H1 (cell line): ENCODE measurements at regions of chr22 and their contacts with region 1.

Region 1: GRCh38 chr22:43427296-43428004 is 15.6 kb downstream of the MPPED1 start:
- DNase-seq: no peak
- H3K4me3 ChIP-seq: no peak overlapping the region
- H3K27ac ChIP-seq: no peak overlapping the region
- H3K4me1 ChIP-seq: peaks cover 0 to 3% (median 0%) of the 10 kb centered on the region in 4 experiments; a peak in 2 of 7 replicates
- H3K27me3 ChIP-seq: no peaks in the 10 kb centered on the region; a peak in 1 of 7 replicates
- CTCF ChIP-seq: peak; percentile 40 to 62 (median 42)
- EP300 ChIP-seq: no peak
- POLR2A ChIP-seq: no peak
- RAD21 ChIP-seq: peak; percentile 34 to 53; a peak in 3 of 4 replicates

Region 2: DNA sequence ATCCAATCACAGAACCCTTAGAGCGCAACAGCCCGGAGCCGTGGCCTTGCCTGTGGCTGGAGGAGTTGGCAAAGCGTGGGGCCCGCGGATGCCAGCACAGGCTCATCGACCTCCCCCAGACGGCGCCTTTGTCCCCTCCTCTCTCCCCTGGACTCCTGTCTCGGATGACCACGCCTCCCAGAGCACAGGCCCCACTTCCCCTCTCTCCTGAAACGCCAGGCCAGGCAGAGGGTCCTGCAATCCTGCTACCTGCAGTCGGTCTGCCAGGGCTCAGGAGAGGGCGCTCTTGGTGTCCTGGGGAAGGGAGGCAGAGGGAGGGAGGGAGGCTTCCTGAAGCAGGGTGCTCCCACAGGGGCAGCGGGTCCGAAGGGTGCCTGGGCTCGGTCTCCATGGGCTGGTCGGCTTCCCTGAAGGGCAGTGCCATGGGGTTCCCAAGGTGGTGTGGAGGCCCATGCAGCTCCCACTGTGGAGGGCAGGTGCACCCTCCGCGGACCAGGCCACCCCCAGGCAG is 223.9 kb before region 1 on chr22:
- CTCF ChIA-PET with region 1: no interaction called
- POLR2A ChIA-PET with region 1: no interaction called
- DNase-seq: peak; percentile 70 to 82
- H3K4me3 ChIP-seq: peak overlapping the region in 1 of 4 experiments; percentile 37; a peak in 1 of 8 replicates
- H3K27ac ChIP-seq: no peak overlapping the region
- H3K4me1 ChIP-seq: peaks cover 2 to 11% (median 4%) of the 10 kb centered on the region in 4 experiments; a peak in 6 of 7 replicates
- H3K27me3 ChIP-seq: no peaks in the 10 kb centered on the region
- CTCF ChIP-seq: peak; percentile 64 to 79 (median 77)
- EP300 ChIP-seq: no peak
- POLR2A ChIP-seq: no peak
- RAD21 ChIP-seq: peak; percentile 54 to 63

Region 3: GRCh38 chr22:43326331-43327156 is 100.9 kb before region 1 on chr22:
- CTCF ChIA-PET with region 1: no interaction called
- POLR2A ChIA-PET with region 1: no interaction called
- DNase-seq: no peak
- H3K4me3 ChIP-seq: no peak overlapping the region
- H3K27ac ChIP-seq: no peak overlapping the region
- H3K4me1 ChIP-seq: peaks cover 0 to 8% (median 4%) of the 10 kb centered on the region in 4 experiments; a peak in 2 of 7 replicates
- H3K27me3 ChIP-seq: no peaks in the 10 kb centered on the region
- CTCF ChIP-seq: no peak
- EP300 ChIP-seq: no peak
- POLR2A ChIP-seq: no peak
- RAD21 ChIP-seq: no peak

Region 4: DNA sequence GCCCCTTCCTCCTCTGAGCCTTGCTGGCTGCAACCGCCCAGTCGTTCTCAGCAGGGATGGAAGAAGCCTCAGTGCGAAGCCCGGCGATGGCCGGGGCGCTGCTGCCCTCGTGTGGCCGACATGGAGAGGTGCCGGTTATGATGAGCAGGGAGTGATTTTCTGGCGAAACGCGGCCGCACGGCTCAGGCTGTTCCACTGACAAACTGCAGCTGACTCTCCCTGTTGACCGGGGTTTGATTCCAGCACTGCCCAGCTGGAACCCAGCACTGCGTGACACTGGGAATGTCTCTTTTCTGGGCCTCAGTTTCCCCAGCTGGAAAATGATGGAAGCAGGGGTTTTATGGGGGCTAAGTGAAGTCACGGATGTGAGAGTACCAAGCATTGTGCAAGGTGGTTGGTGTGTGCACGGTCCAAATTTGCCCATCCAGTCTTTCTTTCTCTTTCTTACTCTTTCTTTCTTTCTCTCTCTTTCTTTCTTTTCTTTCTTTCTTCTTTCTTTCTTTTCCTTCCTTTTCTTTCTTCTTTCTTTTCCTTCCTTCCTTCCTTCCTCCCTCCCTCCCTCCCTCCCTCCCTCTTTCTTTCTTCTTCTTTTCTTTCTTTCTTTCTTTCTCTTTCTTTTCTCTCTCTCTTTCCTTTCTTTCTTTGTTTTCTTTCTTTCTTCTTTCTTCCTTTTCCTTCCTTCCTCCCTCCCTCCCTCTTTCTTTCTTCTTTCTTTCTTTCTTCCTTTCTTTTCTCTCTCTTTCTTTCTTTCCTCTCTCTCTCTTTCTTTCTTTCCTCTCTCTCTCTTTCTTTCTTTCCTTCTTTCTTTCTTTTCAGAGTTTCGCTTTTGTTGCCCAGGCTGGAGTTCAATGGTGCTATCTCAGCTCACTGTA is 41.4 kb before region 1 on chr22:
- CTCF ChIA-PET with region 1: interaction called, 13 read pairs
- POLR2A ChIA-PET with region 1: no interaction called
- DNase-seq: peak; percentile 53 to 90
- H3K4me3 ChIP-seq: no peak overlapping the region
- H3K27ac ChIP-seq: no peak overlapping the region
- H3K4me1 ChIP-seq: peaks cover 0 to 9% (median 2%) of the 10 kb centered on the region in 4 experiments; a peak in 3 of 7 replicates
- H3K27me3 ChIP-seq: peaks cover 0 to 12% (median 3%) of the 10 kb centered on the region in 4 experiments; a peak in 5 of 7 replicates
- CTCF ChIP-seq: peak; percentile 95 to 96 (median 96)
- EP300 ChIP-seq: no peak
- POLR2A ChIP-seq: no peak
- RAD21 ChIP-seq: peak; percentile 100

Region 5: GRCh38 chr22:43404673-43405385 is 22.6 kb before region 1 on chr22:
- CTCF ChIA-PET with region 1: interaction called, 14 read pairs
- POLR2A ChIA-PET with region 1: no interaction called
- DNase-seq: no peak
- H3K4me3 ChIP-seq: no peak overlapping the region
- H3K27ac ChIP-seq: no peak overlapping the region
- H3K4me1 ChIP-seq: no peaks in the 10 kb centered on the region
- H3K27me3 ChIP-seq: peaks cover 0 to 5% (median 3%) of the 10 kb centered on the region in 4 experiments; a peak in 3 of 7 replicates
- CTCF ChIP-seq: no peak
- EP300 ChIP-seq: no peak
- POLR2A ChIP-seq: no peak
- RAD21 ChIP-seq: no peak

Region 6: DNA sequence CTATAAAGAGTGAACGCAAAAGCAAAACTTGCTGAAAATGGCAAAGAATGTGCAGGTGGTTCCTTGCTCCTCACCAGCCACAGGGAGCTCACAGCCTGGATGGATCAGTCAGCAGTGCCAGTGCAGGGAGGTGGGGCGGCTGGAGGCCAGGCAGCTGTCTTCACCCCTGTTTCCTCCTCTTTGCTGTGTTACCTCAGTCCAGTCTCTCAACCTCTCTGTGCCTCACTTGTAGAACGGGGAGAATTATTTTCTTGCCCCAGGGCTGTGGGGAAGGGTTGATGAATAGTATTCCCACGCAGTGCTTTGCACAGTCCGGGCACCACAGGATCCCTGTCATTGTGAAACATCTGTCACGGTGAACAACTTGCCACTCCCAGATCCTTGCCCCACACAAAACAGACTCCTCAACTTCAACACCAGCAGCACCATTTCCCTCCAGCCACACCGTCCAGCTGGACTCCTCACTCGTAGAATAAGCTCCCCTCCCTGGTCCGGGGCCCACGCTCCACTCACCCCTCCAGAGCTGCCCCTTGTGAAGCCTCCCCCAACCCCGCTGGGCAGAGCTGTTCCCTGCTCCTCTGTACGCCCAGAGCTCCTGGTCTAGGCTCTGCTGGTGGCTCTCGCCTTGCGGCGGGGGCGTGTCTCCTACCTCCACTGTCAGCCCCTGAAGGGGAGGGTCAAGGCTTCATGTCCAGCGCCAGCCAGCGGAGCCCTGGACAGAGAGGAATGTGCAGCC is 12.1 kb after region 1 on chr22:
- CTCF ChIA-PET with region 1: interaction called, 12 read pairs
- POLR2A ChIA-PET with region 1: no interaction called
- DNase-seq: no peak
- H3K4me3 ChIP-seq: no peak overlapping the region
- H3K27ac ChIP-seq: no peak overlapping the region
- H3K4me1 ChIP-seq: no peaks in the 10 kb centered on the region
- H3K27me3 ChIP-seq: no peaks in the 10 kb centered on the region; a peak in 1 of 7 replicates
- CTCF ChIP-seq: no peak
- EP300 ChIP-seq: no peak
- POLR2A ChIP-seq: no peak
- RAD21 ChIP-seq: no peak

Region 7: DNA sequence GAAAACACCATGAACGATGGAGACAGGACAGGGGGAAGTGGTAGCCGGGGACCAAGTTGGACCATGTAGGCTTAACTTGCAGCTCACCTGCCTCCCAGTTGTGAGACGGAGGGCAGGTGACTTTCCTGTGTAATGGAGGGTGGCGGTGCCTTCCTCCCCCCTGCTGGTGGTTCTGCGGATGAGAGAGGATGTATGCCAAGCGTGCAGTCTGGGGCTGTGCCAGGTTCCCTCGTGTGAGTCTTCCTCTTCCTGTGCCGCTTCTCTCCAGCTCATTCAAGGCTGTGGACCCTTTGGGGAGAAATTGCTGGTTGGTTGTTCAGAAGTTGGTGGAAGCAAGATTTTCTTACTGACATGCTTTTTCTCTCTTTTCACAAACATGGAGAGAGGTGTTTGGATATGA is 19.5 kb after region 1 on chr22:
- CTCF ChIA-PET with region 1: interaction called, 11 read pairs
- POLR2A ChIA-PET with region 1: no interaction called
- DNase-seq: no peak
- H3K4me3 ChIP-seq: no peak overlapping the region
- H3K27ac ChIP-seq: no peak overlapping the region
- H3K4me1 ChIP-seq: no peaks in the 10 kb centered on the region
- H3K27me3 ChIP-seq: no peaks in the 10 kb centered on the region
- CTCF ChIP-seq: no peak
- EP300 ChIP-seq: no peak
- POLR2A ChIP-seq: no peak
- RAD21 ChIP-seq: no peak

Region 8: GRCh38 chr22:43537014-43537585 is 109.7 kb after region 1 on chr22:
- CTCF ChIA-PET with region 1: no interaction called
- POLR2A ChIA-PET with region 1: no interaction called
- DNase-seq: no peak
- H3K4me3 ChIP-seq: no peak overlapping the region
- H3K27ac ChIP-seq: no peak overlapping the region
- H3K4me1 ChIP-seq: no peaks in the 10 kb centered on the region
- H3K27me3 ChIP-seq: no peaks in the 10 kb centered on the region
- CTCF ChIP-seq: no peak
- EP300 ChIP-seq: no peak
- POLR2A ChIP-seq: no peak
- RAD21 ChIP-seq: no peak

Region 9: GRCh38 chr22:43587565-43587964 is 160.1 kb after region 1 on chr22:
- CTCF ChIA-PET with region 1: no interaction called
- POLR2A ChIA-PET with region 1: no interaction called
- DNase-seq: no peak
- H3K4me3 ChIP-seq: no peak overlapping the region
- H3K27ac ChIP-seq: no peak overlapping the region
- H3K4me1 ChIP-seq: no peaks in the 10 kb centered on the region
- H3K27me3 ChIP-seq: no peaks in the 10 kb centered on the region
- CTCF ChIP-seq: no peak
- EP300 ChIP-seq: no peak
- POLR2A ChIP-seq: no peak
- RAD21 ChIP-seq: no peak